Activated B cell treated with CpG ODN at 0.5 μM for 24 hours (primary cell): ENCODE measurements at regions of chr2 and their contacts with region 1.

Region 1: DNA sequence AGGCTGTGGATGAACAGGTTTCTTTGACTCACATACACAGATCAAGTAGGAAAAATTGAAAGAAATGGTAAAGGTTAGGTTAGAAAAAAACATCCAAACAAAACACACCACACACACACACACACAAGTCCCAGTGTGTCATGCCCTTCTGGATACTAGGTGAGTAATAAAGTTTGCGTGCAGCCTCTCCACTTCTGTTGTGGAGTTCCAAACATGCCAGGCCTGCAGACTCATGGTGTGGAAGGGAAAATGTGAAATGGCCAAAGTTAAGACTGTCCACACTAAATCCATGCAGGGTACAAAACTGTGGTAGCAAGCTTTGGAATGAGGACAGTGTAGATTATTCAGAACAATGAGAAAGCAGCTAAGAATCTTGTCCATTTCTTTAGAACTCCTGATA is 114.6 kb downstream of the IKZF2 start:
- DNase-seq: no peak
- ATAC-seq: no peak
- H3K4me3 Mint-ChIP-seq: no peak overlapping the region
- H3K27ac Mint-ChIP-seq: no peak overlapping the region
- H3K4me1 Mint-ChIP-seq: peaks cover 57% of the 10 kb centered on the region
- H3K27me3 Mint-ChIP-seq: no peaks in the 10 kb centered on the region
- CTCF ChIP-seq: no peak

Region 2: GRCh38 chr2:213015387-213016165 is 21.3 kb before region 1 on chr2:
- CTCF ChIA-PET with region 1: no interaction called
- POLR2A ChIA-PET with region 1: interaction called, 7 read pairs
- intact Hi-C with region 1: loop called (anchors 1 kb)
- DNase-seq: no peak
- ATAC-seq: peak; percentile 86
- H3K4me3 Mint-ChIP-seq: peak overlapping the region; percentile 68
- H3K27ac Mint-ChIP-seq: peak overlapping the region; percentile 85
- H3K4me1 Mint-ChIP-seq: peaks cover 38% of the 10 kb centered on the region
- H3K27me3 Mint-ChIP-seq: no peaks in the 10 kb centered on the region
- CTCF ChIP-seq: no peak

Region 3: DNA sequence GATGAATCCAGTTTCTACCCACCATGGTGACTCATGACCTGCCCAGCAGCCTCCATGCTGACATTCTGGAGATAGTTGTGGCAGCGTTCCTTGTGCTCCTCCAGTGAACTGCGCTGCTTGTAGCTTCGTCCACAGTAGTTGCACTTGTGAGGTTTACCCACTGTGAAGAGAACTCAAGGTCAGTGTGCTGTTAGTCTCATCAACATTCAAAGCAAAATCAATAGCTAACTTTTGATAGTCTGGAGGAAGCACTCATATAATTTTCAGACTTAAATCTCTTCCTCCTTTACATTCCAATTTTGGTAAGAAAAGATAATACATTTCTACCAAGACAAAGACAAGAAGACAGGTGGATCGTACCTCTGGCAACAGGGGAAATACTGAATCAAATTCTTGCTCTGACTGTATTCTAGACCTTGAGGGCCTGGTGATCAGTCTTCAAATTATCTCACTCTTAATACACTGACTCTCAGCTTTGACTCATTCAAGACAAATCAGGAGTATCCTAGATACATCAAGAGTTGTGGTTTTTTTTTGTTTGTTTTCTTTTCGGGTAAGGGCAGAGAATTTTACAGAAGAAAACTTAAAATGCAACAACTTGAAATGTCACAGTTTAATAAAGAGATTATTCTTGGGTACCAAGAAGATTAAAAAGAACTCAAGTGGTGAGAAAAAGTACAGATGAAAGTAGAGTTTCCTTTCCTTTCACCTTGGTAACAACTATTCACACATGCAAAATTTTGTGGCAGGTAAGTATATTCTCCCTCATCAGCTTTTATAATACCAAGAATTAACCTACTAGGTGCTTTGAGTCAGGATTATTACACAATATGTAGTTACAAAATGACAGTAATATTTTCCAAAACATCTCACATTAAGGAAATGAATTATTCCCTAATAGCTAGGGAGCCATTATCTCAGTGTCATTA is 14.6 kb before region 1 on chr2:
- CTCF ChIA-PET with region 1: no interaction called
- POLR2A ChIA-PET with region 1: interaction called, 7 read pairs
- intact Hi-C with region 1: loop called (anchors 2 kb)
- DNase-seq: no peak
- ATAC-seq: peak; percentile 57
- H3K4me3 Mint-ChIP-seq: peak overlapping the region; percentile 9
- H3K27ac Mint-ChIP-seq: peak overlapping the region; percentile 67
- H3K4me1 Mint-ChIP-seq: peaks cover 26% of the 10 kb centered on the region
- H3K27me3 Mint-ChIP-seq: no peaks in the 10 kb centered on the region
- CTCF ChIP-seq: no peak

Region 4: DNA sequence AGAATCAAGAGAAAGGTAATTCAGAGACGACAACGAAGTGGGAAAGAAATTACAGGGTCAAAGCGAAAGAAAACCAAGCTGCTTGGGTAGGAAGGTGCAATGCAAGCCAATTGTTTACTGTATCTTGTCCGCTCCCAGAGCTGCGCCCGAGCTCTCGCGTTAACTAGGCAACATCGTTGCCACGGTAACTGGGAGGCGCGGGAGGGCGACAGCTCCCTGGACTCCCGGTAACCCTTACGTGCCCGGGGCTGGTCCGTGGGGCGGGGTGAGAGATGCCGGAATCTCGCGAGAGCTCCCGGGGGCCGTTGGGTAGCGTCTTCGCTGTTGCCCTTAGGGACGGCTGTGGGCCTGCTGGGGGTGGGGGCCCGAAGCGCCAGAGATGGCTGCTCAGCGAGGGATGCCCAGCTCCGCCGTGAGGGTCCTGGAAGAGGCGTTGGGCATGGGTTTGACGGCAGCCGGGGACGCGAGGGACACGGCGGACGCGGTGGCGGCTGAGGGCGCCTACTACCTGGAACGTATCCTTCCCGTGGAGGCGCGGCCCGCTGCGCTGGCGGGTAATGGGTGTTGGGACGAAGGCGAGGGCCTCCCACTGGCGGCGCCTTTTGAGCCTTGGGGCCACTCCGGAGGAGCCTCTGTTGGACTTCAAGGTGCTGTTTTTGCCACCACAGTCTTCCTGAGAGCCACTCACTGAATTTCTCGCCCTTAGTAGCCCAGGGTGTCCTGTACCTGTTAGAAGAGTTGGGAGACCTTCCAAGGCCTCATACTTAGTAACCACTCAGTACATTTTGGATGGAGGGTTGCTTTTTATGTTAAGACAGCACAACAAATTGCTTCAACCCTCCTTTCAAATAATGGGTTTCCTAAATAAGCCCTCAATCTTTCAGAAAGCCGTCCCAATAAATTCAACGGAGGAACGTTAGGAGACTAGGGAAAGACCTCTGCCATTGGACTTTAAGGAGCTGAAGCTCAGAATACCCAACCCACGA is 247.6 kb after region 1 on chr2 and contains the start of gene SPAG16:
- CTCF ChIA-PET with region 1: no interaction called
- POLR2A ChIA-PET with region 1: no interaction called
- intact Hi-C with region 1: loop called (anchors 5 kb)
- DNase-seq: peak; percentile 89
- ATAC-seq: peak; percentile 98
- H3K4me3 Mint-ChIP-seq: peak within 1 kb of the TSS; percentile 96
- H3K27ac Mint-ChIP-seq: peak within 1 kb of the TSS; percentile 87
- H3K4me1 Mint-ChIP-seq: peaks cover 24% of the 10 kb centered on the region
- H3K27me3 Mint-ChIP-seq: no peaks in the 10 kb centered on the region
- CTCF ChIP-seq: no peak
- total RNA-seq, gene SPAG16: 11.2 and 11.5 TPM in 2 replicates

Region 5: GRCh38 chr2:213524164-213524563 is 487.3 kb after region 1 on chr2:
- CTCF ChIA-PET with region 1: no interaction called
- POLR2A ChIA-PET with region 1: no interaction called
- intact Hi-C with region 1: no loop called
- DNase-seq: no peak
- ATAC-seq: no peak
- H3K4me3 Mint-ChIP-seq: no peak overlapping the region
- H3K27ac Mint-ChIP-seq: no peak overlapping the region
- H3K4me1 Mint-ChIP-seq: no peaks in the 10 kb centered on the region
- H3K27me3 Mint-ChIP-seq: no peaks in the 10 kb centered on the region
- CTCF ChIP-seq: no peak